AG04449 (cell line): ENCODE measurements at regions of chr19 and their contacts with region 1.

Region 1: DNA sequence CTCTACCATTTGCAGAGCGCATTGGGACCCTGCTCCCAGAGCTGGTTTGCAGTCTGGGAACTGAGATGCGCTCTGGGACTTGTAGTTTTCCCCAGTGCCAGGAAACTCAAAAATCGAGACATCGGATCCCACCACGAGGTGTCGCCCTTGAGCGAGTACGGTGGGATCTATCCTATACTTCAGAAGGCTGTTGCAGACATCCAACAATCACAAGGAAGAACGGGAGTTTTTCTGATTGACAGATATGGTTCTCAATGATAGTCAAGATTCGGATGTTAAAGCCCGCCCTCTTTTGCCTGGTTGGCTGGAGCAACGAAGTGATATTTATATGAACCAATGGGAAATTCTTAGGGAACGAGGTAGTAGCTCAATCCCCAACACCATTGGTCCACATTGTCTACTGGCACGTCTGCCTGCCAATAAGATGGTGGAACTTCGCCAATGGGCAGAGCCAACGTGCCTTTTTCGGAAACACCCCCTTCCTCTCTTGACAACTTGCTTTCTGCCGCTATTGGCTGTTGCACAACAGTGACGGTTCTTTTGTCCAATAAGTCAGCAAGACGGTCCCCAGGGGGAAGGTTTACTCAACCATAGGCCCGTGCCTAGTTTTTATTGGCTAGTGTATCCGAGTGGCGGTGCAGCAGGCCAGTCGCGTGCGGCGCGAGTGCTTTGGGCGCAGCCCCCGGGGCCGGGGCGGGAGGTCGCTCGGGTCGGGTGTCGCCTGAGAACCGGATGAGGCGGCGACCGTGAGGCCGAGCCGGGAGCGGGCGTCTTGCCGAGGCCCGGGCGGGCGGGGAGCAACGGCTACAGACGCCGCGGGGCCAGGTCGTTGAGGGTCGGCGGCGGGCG is at the start of gene DNM2:
- DNase-seq: peak; percentile 100
- H3K4me3 ChIP-seq: peak within 1 kb of the TSS; percentile 96
- CTCF ChIP-seq: peak; percentile 71

Region 2: DNA sequence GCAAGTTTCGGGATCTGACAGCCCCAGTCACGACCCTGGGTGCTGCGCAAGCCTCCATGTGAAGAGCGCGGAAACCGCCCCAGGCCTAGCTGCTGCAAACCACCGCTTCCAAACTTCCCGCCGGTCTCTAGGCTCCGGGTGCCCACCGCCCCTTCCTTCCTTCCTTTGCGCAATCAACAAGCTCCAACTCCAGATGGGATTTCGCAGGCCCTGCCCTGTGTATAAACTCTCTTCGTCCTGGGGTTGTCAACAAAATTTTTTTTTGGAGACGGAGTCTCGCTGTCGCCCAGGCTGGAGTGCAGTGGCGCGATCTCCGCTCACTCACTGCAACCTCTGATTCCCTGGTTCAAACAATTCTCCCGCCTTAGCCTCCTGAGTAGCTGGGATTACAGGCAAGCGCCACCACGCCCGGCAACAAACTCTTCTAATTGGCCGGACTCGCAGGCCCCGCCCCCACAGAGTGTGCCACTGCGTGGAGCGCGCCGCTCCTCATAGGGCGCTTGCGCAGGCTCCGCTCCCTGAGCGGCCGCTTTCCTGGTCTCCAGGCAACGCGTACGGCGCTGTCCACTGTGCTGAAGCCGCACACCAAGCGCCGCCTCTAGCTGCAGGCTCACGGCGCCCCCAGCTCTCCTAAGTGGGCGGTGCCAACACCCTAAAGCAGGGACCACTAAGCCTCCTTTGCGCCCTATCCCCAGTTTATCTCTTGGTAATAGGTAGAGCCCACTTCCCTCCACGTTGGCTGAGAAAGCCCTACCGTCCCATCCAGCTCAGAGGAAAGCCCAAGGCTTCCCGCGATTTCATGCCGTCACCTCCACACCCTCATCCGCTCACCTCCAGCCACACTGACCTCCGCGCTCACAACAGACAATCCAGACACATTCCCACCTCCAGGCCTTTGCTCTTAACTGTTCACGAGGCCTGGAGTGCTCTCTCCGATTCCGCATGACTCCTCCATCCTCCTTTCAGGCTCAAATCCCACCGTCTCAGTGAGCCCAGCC is 21.9 kb before region 1 on chr19:
- CTCF ChIA-PET with region 1: interaction called, 85 read pairs
- POLR2A ChIA-PET with region 1: no interaction called
- DNase-seq: no peak
- H3K4me3 ChIP-seq: peak overlapping the region; percentile 27
- CTCF ChIP-seq: no peak

Region 3: GRCh38 chr19:10769533-10770491 is 52.2 kb after region 1 on chr19:
- CTCF ChIA-PET with region 1: interaction called, 17 read pairs
- POLR2A ChIA-PET with region 1: no interaction called
- DNase-seq: no peak
- H3K4me3 ChIP-seq: no peak overlapping the region
- CTCF ChIP-seq: peak; percentile 4

Region 4: GRCh38 chr19:10789866-10790265 is 72.3 kb after region 1 on chr19:
- CTCF ChIA-PET with region 1: no interaction called
- POLR2A ChIA-PET with region 1: no interaction called
- DNase-seq: no peak
- H3K4me3 ChIP-seq: no peak overlapping the region
- CTCF ChIP-seq: no peak

Region 5: GRCh38 chr19:10835754-10836477 is 118.3 kb after region 1 on chr19 and contains the start of gene TMED1:
- CTCF ChIA-PET with region 1: interaction called, 15 read pairs
- POLR2A ChIA-PET with region 1: interaction called, 11 read pairs
- DNase-seq: peak; percentile 92
- H3K4me3 ChIP-seq: peak within 1 kb of the TSS; percentile 79
- CTCF ChIP-seq: peak; percentile 24

Region 6: GRCh38 chr19:10870955-10871603 is 153.5 kb after region 1 on chr19 and contains the start of gene CARM1:
- CTCF ChIA-PET with region 1: interaction called, 211 read pairs
- POLR2A ChIA-PET with region 1: interaction called, 3 read pairs
- DNase-seq: peak; percentile 76
- H3K4me3 ChIP-seq: peak within 1 kb of the TSS; percentile 78
- CTCF ChIP-seq: peak; percentile 81